Lower leg skin (tissue), 4 donors: ENCODE measurements at regions of chr11 and their contacts with region 1.

Region 1: GRCh38 chr11:18321980-18322711 is at the starts of genes GTF2H1 and HPS5:
- DNase-seq: peak; percentile 97 to 99
- H3K4me3 ChIP-seq: peak within 1 kb of the TSS; percentile 47
- CTCF ChIP-seq: peak in 1 of 3 donors; percentile 14
- POLR2A ChIP-seq: peak in 1 of 2 donors; percentile 56
- total RNA-seq, gene GTF2H1: 46.4 to 73.0 (median 53.5) TPM
- total RNA-seq, gene HPS5: 10.0 to 26.4 (median 20.4) TPM

Region 2: GRCh38 chr11:18361154-18361553 is 39.0 kb after region 1 on chr11:
- intact Hi-C with region 1: no loop called
- DNase-seq: no peak
- H3K4me3 ChIP-seq: no peak overlapping the region
- CTCF ChIP-seq: no peak
- POLR2A ChIP-seq: no peak

Region 3: GRCh38 chr11:18395735-18396504 is 73.8 kb after region 1 on chr11:
- intact Hi-C with region 1: loop called (anchors 10 kb)
- DNase-seq: peak; percentile 98 to 99
- H3K4me3 ChIP-seq: peak overlapping the region; percentile 96
- CTCF ChIP-seq: no peak
- POLR2A ChIP-seq: no peak